CD8-positive, alpha-beta T cell (primary cell): ENCODE measurements at regions of chr22 and their contacts with region 1.

Region 1: GRCh38 chr22:31272522-31273446 is 19.5 kb downstream of the PIK3IP1 start:
- DNase-seq: peak in 8 of 9 experiments; percentile 44 to 76 (median 64)
- ATAC-seq: peak; percentile 76
- H3K4me3 ChIP-seq: no peak overlapping the region
- H3K4me3 Mint-ChIP-seq: no peak overlapping the region
- H3K27ac ChIP-seq: no peak overlapping the region
- H3K27ac Mint-ChIP-seq: peak overlapping the region; percentile 91
- H3K4me1 ChIP-seq: peaks cover 61% of the 10 kb centered on the region
- H3K4me1 Mint-ChIP-seq: peaks cover 63% of the 10 kb centered on the region
- H3K27me3 ChIP-seq: no peaks in the 10 kb centered on the region
- H3K27me3 Mint-ChIP-seq: no peaks in the 10 kb centered on the region
- CTCF ChIP-seq: peak; percentile 63

Region 2: DNA sequence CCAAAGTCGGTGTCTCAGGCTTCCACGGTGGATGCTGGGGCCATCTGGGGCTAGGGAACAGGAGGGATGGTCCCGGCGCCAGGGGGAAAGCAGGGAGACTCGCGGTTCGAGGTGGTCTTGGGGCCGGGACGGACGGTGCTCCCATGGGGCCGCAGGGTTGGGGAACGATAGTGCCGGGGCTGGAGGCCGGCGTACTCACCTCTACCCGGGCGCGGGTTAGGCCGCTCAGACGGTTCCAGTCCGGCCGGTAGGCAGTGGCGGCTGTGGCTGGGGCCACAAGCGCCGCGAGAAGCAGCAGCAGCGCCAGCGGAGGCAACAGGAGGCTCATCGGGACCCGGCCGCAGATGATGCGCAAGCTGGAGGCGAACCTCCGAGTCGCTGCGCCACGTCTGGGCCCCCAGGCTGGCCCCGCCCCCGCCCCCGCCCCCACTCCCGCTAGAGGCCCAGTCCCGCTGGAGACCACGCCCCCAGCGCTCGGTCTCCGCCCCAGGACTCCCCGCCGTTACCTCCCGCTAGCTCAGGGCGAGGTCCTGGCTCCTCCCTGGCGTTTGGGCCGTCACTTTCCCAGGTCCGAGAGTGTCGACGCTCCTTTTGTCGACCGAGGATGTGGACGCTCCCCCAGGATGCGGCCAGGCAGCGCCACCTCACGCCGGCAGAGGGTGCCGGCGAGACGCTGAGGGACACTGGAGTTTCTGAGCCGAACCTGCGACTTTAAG is 165.4 kb before region 1 on chr22 and contains the start of gene SELENOM:
- CTCF ChIA-PET with region 1: interaction called, 15 read pairs
- POLR2A ChIA-PET with region 1: interaction called, 3 read pairs
- intact Hi-C with region 1: no loop called
- DNase-seq: peak; percentile 69 to 94 (median 85)
- ATAC-seq: peak; percentile 96
- H3K4me3 ChIP-seq: peak within 1 kb of the TSS; percentile 80 to 84
- H3K4me3 Mint-ChIP-seq: peak within 1 kb of the TSS; percentile 98
- H3K27ac ChIP-seq: peak within 1 kb of the TSS; percentile 72 to 80
- H3K27ac Mint-ChIP-seq: peak within 1 kb of the TSS; percentile 91
- H3K4me1 ChIP-seq: peaks cover 17% of the 10 kb centered on the region
- H3K4me1 Mint-ChIP-seq: peaks cover 25% of the 10 kb centered on the region
- H3K27me3 ChIP-seq: no peaks in the 10 kb centered on the region
- H3K27me3 Mint-ChIP-seq: no peaks in the 10 kb centered on the region
- CTCF ChIP-seq: peak; percentile 70
- total RNA-seq, gene SELENOM: 55.6 to 62.2 TPM

Region 3: DNA sequence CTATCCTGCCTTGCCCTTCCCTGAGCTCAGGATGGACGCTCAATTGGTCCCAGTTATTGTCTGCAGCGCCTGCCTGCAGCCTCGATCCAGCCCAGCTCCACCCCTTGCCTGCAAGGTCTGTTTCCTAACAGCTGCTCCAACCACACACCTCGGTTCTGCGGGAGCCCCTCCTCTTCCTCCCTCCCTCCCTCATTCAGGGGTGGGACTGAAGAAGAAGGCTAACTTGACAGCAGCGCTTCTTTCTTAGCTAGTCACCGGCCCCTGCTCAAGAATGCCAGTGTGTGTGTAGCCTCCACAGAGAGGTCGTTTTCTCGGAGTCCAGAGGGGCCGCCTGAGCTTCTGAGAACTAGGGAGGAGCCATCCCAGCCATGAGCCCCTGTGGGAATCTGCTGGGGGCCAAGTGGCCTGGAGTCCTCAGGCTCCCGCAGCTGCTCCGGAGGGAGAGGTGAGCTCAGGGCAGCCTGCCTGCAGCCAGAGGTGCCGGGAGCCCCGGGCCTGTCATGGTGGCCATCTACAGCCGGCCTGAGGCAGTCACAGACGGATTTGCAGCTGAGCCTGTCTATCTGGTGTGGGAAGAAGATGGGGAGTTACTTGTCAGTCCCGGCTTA is 24.5 kb before region 1 on chr22:
- CTCF ChIA-PET with region 1: interaction called, 32 read pairs
- POLR2A ChIA-PET with region 1: interaction called, 9 read pairs
- intact Hi-C with region 1: no loop called
- DNase-seq: peak; percentile 40 to 81 (median 72)
- ATAC-seq: peak; percentile 100
- H3K4me3 ChIP-seq: peak overlapping the region; percentile 21 to 33
- H3K4me3 Mint-ChIP-seq: peak overlapping the region; percentile 83
- H3K27ac ChIP-seq: no peak overlapping the region
- H3K27ac Mint-ChIP-seq: no peak overlapping the region
- H3K4me1 ChIP-seq: peaks cover 18% of the 10 kb centered on the region
- H3K4me1 Mint-ChIP-seq: peaks cover 26% of the 10 kb centered on the region
- H3K27me3 ChIP-seq: no peaks in the 10 kb centered on the region
- H3K27me3 Mint-ChIP-seq: no peaks in the 10 kb centered on the region
- CTCF ChIP-seq: no peak

Region 4: DNA sequence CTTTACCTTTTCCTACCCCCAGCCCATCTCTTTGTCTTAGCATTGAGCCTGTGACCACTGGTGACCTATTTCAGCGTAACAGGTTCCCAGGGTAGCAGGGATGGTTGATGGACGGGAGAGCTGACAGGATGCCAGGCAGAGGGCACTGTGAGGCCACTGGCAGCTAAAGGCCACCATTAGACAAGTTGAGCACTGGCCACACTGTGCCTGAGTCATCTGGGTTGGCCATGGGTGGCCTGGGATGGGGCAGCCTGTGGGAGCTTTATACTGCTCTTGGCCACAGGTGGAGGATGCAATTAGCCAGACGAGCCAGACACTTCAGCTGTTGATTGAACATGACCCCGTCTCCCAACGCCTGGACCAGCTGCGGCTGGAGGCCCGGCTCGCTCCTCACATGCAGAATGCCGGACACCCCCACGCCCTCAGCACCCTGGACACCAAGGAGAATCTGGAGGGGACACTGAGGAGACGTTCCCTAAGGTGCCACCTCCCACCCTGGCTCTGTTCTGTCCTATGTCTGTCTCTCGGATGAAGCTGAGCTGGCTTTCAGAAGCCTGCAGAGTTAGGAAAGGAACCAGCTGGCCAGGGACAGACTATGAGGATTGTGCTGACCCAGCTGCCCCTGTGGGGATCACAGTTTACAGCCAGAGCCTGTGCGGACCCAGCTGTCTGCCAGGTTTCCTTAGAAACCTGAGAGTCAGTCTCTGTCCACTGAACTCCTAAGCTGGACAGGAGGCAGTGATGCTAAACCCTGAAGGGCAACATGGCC is 10.3 kb before region 1 on chr22:
- CTCF ChIA-PET with region 1: interaction called, 23 read pairs
- POLR2A ChIA-PET with region 1: interaction called, 3 read pairs
- intact Hi-C with region 1: no loop called
- DNase-seq: no peak
- ATAC-seq: no peak
- H3K4me3 ChIP-seq: no peak overlapping the region
- H3K4me3 Mint-ChIP-seq: no peak overlapping the region
- H3K27ac ChIP-seq: no peak overlapping the region
- H3K27ac Mint-ChIP-seq: no peak overlapping the region
- H3K4me1 ChIP-seq: no peaks in the 10 kb centered on the region
- H3K4me1 Mint-ChIP-seq: no peaks in the 10 kb centered on the region
- H3K27me3 ChIP-seq: no peaks in the 10 kb centered on the region
- H3K27me3 Mint-ChIP-seq: no peaks in the 10 kb centered on the region
- CTCF ChIP-seq: no peak

Region 5: GRCh38 chr22:31302006-31302405 is 29.2 kb after region 1 on chr22:
- CTCF ChIA-PET with region 1: interaction called, 84 read pairs
- POLR2A ChIA-PET with region 1: interaction called, 608 read pairs
- intact Hi-C with region 1: no loop called
- DNase-seq: no peak
- ATAC-seq: no peak
- H3K4me3 ChIP-seq: no peak overlapping the region
- H3K4me3 Mint-ChIP-seq: no peak overlapping the region
- H3K27ac ChIP-seq: no peak overlapping the region
- H3K27ac Mint-ChIP-seq: no peak overlapping the region
- H3K4me1 ChIP-seq: peaks cover 22% of the 10 kb centered on the region
- H3K4me1 Mint-ChIP-seq: peaks cover 43% of the 10 kb centered on the region
- H3K27me3 ChIP-seq: no peaks in the 10 kb centered on the region
- H3K27me3 Mint-ChIP-seq: no peaks in the 10 kb centered on the region
- CTCF ChIP-seq: no peak

Region 6: GRCh38 chr22:31556627-31557203 is 283.9 kb after region 1 on chr22:
- CTCF ChIA-PET with region 1: no interaction called
- POLR2A ChIA-PET with region 1: no interaction called
- intact Hi-C with region 1: no loop called
- DNase-seq: peak in 2 of 9 experiments; percentile 20 to 41
- ATAC-seq: peak; percentile 65
- H3K4me3 ChIP-seq: no peak overlapping the region
- H3K4me3 Mint-ChIP-seq: no peak overlapping the region
- H3K27ac ChIP-seq: no peak overlapping the region
- H3K27ac Mint-ChIP-seq: no peak overlapping the region
- H3K4me1 ChIP-seq: no peaks in the 10 kb centered on the region
- H3K4me1 Mint-ChIP-seq: peaks cover 12% of the 10 kb centered on the region
- H3K27me3 ChIP-seq: no peaks in the 10 kb centered on the region
- H3K27me3 Mint-ChIP-seq: no peaks in the 10 kb centered on the region
- CTCF ChIP-seq: no peak

Region 7: DNA sequence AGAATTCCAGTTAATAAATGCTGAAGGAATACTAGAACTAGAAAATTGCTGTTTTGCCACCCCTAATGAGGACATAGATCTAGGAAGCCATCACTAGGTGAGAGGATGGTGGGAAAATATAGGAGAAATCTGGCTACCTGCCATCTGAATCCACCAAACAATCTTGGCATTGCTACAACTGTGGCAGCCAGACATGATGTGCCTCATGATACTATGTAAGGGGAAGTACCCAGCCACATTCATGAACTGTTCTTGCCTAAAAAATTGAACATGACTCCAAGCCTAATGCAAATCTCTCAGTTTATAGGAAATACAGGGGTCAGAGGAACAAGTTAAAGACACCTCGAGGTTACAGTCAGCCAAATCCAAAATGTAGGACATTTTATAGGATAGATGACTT is 296.3 kb after region 1 on chr22:
- CTCF ChIA-PET with region 1: no interaction called
- POLR2A ChIA-PET with region 1: no interaction called
- intact Hi-C with region 1: no loop called
- DNase-seq: no peak
- ATAC-seq: no peak
- H3K4me3 ChIP-seq: no peak overlapping the region
- H3K4me3 Mint-ChIP-seq: no peak overlapping the region
- H3K27ac ChIP-seq: no peak overlapping the region
- H3K27ac Mint-ChIP-seq: peak overlapping the region; percentile 18
- H3K4me1 ChIP-seq: no peaks in the 10 kb centered on the region
- H3K4me1 Mint-ChIP-seq: peaks cover 3% of the 10 kb centered on the region
- H3K27me3 ChIP-seq: no peaks in the 10 kb centered on the region
- H3K27me3 Mint-ChIP-seq: no peaks in the 10 kb centered on the region
- CTCF ChIP-seq: no peak